SK-N-SH (cell line): ENCODE measurements at regions of chr20 and their contacts with region 1.

Region 1: GRCh38 chr20:19692685-19693119 is 65.4 kb upstream of the RIN2 start:
- DNase-seq: peak; percentile 58
- H3K4me3 ChIP-seq: peak overlapping the region; percentile 18 to 48; a peak in 2 of 4 replicates
- H3K27ac ChIP-seq: no peak overlapping the region; a peak in 1 of 4 replicates
- H3K4me1 ChIP-seq: peaks cover 0 to 13% of the 10 kb centered on the region in 2 experiments; a peak in 1 of 4 replicates
- H3K27me3 ChIP-seq: no peaks in the 10 kb centered on the region
- CTCF ChIP-seq: peak; percentile 95
- EP300 ChIP-seq: no peak
- RAD21 ChIP-seq: peak; percentile 70

Region 2: GRCh38 chr20:19304389-19304788 is 388.3 kb before region 1 on chr20:
- CTCF ChIA-PET with region 1: no interaction called
- POLR2A ChIA-PET with region 1: no interaction called
- DNase-seq: no peak
- H3K4me3 ChIP-seq: no peak overlapping the region
- H3K27ac ChIP-seq: no peak overlapping the region
- H3K4me1 ChIP-seq: no peaks in the 10 kb centered on the region; a peak in 1 of 4 replicates
- H3K27me3 ChIP-seq: no peaks in the 10 kb centered on the region
- CTCF ChIP-seq: no peak
- EP300 ChIP-seq: no peak
- RAD21 ChIP-seq: no peak

Region 3: GRCh38 chr20:19706463-19706862 is 13.8 kb after region 1 on chr20:
- CTCF ChIA-PET with region 1: interaction called, 12 read pairs
- POLR2A ChIA-PET with region 1: no interaction called
- DNase-seq: no peak
- H3K4me3 ChIP-seq: no peak overlapping the region
- H3K27ac ChIP-seq: no peak overlapping the region
- H3K4me1 ChIP-seq: no peaks in the 10 kb centered on the region
- H3K27me3 ChIP-seq: peaks cover 31% of the 10 kb centered on the region
- CTCF ChIP-seq: no peak
- EP300 ChIP-seq: no peak
- RAD21 ChIP-seq: no peak

Region 4: DNA sequence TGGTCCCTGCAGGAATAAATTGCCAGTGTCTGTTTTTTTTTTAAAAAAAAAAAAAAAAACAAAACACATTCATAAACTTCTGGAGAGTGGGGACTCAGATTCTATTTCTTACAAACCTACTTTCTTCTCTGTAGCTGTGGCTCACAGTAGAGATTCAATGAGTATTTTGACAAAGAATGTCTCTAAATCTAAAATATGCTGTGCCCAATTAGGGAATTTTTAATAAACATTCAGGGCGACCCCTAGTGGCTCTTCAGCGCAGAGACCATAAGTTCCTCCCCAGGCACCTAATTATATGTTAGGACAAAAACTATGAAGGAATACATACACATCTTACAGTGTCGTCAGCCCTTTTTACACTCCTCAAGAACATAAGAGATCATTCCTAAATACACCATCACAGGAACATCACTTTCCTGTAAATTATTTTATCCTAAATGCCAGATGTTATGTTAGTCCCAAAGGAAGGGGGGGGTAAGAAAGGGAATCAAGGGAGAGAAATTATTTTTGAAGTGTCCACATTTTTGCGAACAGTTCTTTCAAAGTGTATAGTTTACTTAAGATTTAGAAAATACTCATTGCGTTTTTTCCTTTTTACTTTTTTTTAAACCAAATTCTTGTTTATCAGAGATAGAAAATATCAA is 302.6 kb after region 1 on chr20:
- CTCF ChIA-PET with region 1: interaction called, 21 read pairs
- POLR2A ChIA-PET with region 1: no interaction called
- DNase-seq: peak; percentile 60
- H3K4me3 ChIP-seq: peak overlapping the region in 1 of 2 experiments; percentile 33; a peak in 1 of 4 replicates
- H3K27ac ChIP-seq: peak overlapping the region; percentile 93 to 99
- H3K4me1 ChIP-seq: peaks cover 33 to 48% of the 10 kb centered on the region in 2 experiments
- H3K27me3 ChIP-seq: no peaks in the 10 kb centered on the region
- CTCF ChIP-seq: peak; percentile 97
- EP300 ChIP-seq: no peak
- RAD21 ChIP-seq: peak; percentile 88